B cell (primary cell): ENCODE measurements at regions of chrX and their contacts with region 1.

Region 1: GRCh38 chrX:1491851-1492349 is 39.2 kb upstream of the ASMTL start:
- DNase-seq: peak; percentile 65
- ATAC-seq: peak; percentile 36
- H3K4me3 ChIP-seq: no peak overlapping the region
- H3K4me3 Mint-ChIP-seq: peak overlapping the region; percentile 84
- H3K27ac ChIP-seq: no peak overlapping the region
- H3K27ac Mint-ChIP-seq: peak overlapping the region; percentile 93
- H3K4me1 ChIP-seq: peaks cover 21 to 41% of the 10 kb centered on the region in 2 donors
- H3K4me1 Mint-ChIP-seq: peaks cover 61% of the 10 kb centered on the region
- H3K27me3 ChIP-seq: no peaks in the 10 kb centered on the region
- H3K27me3 Mint-ChIP-seq: no peaks in the 10 kb centered on the region
- CTCF ChIP-seq: no peak

Region 2: DNA sequence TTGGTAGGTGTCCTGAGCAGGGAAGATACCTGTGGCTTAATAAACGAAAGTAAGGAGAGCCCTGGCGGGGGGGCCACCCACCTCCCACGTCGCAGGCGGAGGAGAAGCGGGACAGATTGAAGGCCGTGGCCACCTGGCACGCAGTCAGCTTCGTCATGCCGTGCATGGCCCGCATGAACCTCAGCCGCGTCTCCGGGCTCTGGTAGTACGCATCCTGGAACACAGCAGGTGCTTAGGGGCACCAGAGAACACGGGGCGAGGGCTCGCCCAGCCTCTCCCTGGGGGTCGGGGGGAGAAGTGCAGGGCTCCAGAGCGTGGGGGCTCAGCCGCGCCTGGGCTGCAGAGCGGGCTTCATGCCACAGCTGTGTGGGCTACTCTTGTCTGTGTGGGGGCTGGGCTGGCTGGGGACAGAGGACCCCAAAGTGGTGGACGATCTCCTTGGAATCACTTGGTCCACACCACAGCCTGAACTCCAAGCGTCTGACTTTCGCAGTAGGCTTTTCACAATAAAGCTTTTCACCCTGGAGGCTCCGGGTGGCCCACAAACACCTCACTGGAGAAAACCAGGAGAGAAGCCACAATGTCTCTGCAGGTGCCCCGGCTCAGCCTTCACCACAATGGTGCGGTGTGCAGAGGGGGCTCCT is 72.9 kb before region 1 on chrX:
- CTCF ChIA-PET with region 1: no interaction called
- POLR2A ChIA-PET with region 1: no interaction called
- intact Hi-C with region 1: loop called (anchors 2 kb)
- DNase-seq: no peak
- ATAC-seq: no peak
- H3K4me3 ChIP-seq: no peak overlapping the region
- H3K4me3 Mint-ChIP-seq: no peak overlapping the region
- H3K27ac ChIP-seq: no peak overlapping the region
- H3K27ac Mint-ChIP-seq: no peak overlapping the region
- H3K4me1 ChIP-seq: no peaks in the 10 kb centered on the region
- H3K4me1 Mint-ChIP-seq: no peaks in the 10 kb centered on the region
- H3K27me3 ChIP-seq: no peaks in the 10 kb centered on the region
- H3K27me3 Mint-ChIP-seq: no peaks in the 10 kb centered on the region
- CTCF ChIP-seq: no peak

Region 3: GRCh38 chrX:1481636-1482529 is 10.0 kb before region 1 on chrX:
- CTCF ChIA-PET with region 1: no interaction called
- POLR2A ChIA-PET with region 1: no interaction called
- intact Hi-C with region 1: loop called (anchors 1 kb)
- DNase-seq: peak; percentile 88
- ATAC-seq: peak; percentile 75
- H3K4me3 ChIP-seq: peak overlapping the region in 4 of 5 experiments; percentile 19 to 45 (median 26)
- H3K4me3 Mint-ChIP-seq: peak overlapping the region; percentile 80
- H3K27ac ChIP-seq: peak overlapping the region; percentile 68 to 89
- H3K27ac Mint-ChIP-seq: peak overlapping the region; percentile 98
- H3K4me1 ChIP-seq: peaks cover 44 to 72% of the 10 kb centered on the region in 2 donors
- H3K4me1 Mint-ChIP-seq: peaks cover 74% of the 10 kb centered on the region
- H3K27me3 ChIP-seq: no peaks in the 10 kb centered on the region
- H3K27me3 Mint-ChIP-seq: no peaks in the 10 kb centered on the region
- CTCF ChIP-seq: no peak

Region 4: GRCh38 chrX:1554469-1555210 is 62.7 kb after region 1 on chrX:
- CTCF ChIA-PET with region 1: no interaction called
- POLR2A ChIA-PET with region 1: no interaction called
- intact Hi-C with region 1: loop called (anchors 2 kb)
- DNase-seq: peak; percentile 89
- ATAC-seq: peak; percentile 98
- H3K4me3 ChIP-seq: peak overlapping the region in 1 of 5 experiments; percentile 23
- H3K4me3 Mint-ChIP-seq: peak overlapping the region; percentile 78
- H3K27ac ChIP-seq: peak overlapping the region; percentile 85 to 99
- H3K27ac Mint-ChIP-seq: peak overlapping the region; percentile 99
- H3K4me1 ChIP-seq: peaks cover 50 to 59% of the 10 kb centered on the region in 2 donors
- H3K4me1 Mint-ChIP-seq: peaks cover 53% of the 10 kb centered on the region
- H3K27me3 ChIP-seq: no peaks in the 10 kb centered on the region
- H3K27me3 Mint-ChIP-seq: no peaks in the 10 kb centered on the region
- CTCF ChIP-seq: no peak